ENCODE measurements at regions of chr6 and their contacts with region 1.

Region 1: GRCh38 chr6:24855395-24856245 is 56.9 kb upstream of the ARMH2 start:
- DNase-seq: peak; percentile 25 to 83 (median 74)
- ATAC-seq: peak; percentile 78
- H3K4me3 ChIP-seq: no peak overlapping the region
- H3K4me3 Mint-ChIP-seq: peak overlapping the region in 8 of 10 donors; percentile 48 to 89 (median 62)
- H3K27ac ChIP-seq: peak overlapping the region; percentile 72
- H3K27ac Mint-ChIP-seq: peak overlapping the region; percentile 86 to 99 (median 94)
- H3K4me1 ChIP-seq: peaks cover 47 to 59% of the 10 kb centered on the region in 2 donors
- H3K4me1 Mint-ChIP-seq: peaks cover 51 to 72% (median 66%) of the 10 kb centered on the region in 7 donors
- H3K27me3 ChIP-seq: no peaks in the 10 kb centered on the region
- H3K27me3 Mint-ChIP-seq: no peaks in the 10 kb centered on the region

Region 2: DNA sequence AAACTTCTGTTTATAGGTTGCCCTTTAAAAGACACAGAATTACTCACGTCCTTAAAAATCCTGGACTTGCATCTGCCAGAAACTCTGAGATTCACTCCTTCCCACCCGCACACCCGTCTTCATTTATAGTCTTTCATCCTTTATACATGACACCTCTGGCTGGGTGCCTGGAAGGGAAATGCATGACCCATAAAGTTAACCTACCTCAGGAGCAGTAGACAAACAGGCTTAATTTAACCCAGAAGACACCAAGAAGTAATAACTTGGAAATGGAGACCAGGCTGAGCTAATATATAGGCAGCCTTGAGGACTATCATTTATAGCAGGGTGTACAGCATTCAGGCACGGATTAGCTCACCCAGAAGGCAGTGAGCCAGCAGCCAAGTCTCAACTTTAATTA is 1158.6 kb before region 1 on chr6:
- CTCF ChIA-PET with region 1: no interaction called
- POLR2A ChIA-PET with region 1: no interaction called
- intact Hi-C with region 1: no loop called
- DNase-seq: no peak
- ATAC-seq: no peak
- H3K4me3 ChIP-seq: no peak overlapping the region
- H3K4me3 Mint-ChIP-seq: no peak overlapping the region
- H3K27ac ChIP-seq: no peak overlapping the region
- H3K27ac Mint-ChIP-seq: no peak overlapping the region
- H3K4me1 ChIP-seq: no peaks in the 10 kb centered on the region
- H3K4me1 Mint-ChIP-seq: no peaks in the 10 kb centered on the region
- H3K27me3 ChIP-seq: no peaks in the 10 kb centered on the region
- H3K27me3 Mint-ChIP-seq: no peaks in the 10 kb centered on the region

Region 3: DNA sequence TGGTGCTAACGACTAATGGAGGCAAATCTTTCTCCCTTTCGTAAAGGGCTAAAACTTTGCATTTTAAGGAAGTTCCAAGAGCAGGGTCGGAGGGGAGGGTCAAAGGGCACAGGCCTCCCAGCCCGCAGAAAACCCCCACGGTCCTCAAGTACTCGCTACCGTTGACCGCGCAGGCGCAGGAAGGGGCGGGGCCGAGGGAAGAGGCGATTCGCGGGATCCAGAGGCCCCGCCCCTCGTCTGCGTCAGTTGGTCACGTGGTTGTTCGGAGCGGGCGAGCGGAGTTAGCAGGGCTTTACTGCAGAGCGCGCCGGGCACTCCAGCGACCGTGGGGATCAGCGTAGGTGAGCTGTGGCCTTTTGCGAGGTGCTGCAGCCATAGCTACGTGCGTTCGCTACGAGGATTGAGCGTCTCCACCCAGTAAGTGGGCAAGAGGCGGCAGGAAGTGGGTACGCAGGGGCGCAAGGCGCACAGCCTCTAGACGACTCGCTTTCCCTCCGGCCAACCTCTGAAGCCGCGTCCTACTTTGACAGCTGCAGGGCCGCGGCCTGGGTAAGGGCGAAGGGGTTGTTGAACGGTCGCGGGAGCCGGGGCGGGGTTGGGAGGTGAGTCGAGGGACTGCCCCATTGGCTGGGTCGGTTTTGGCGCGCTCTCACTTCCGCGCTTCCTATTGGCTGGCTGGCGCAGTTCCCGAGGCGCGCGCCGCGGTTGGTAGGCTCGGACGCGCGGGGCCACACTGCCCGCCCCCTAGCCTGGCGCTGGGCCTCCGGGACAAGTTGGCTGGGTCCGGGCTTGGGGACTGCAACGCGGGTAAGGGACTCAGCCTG is 80.7 kb before region 1 on chr6 and contains the start of gene GMNN:
- CTCF ChIA-PET with region 1: no interaction called
- POLR2A ChIA-PET with region 1: no interaction called
- intact Hi-C with region 1: loop called in 1 of 2 experiments (anchors 5 kb)
- DNase-seq: peak; percentile 91 to 99 (median 94)
- ATAC-seq: peak; percentile 95
- H3K4me3 ChIP-seq: peak within 1 kb of the TSS; percentile 93
- H3K4me3 Mint-ChIP-seq: peak within 1 kb of the TSS; percentile 98 to 99 (median 98)
- H3K27ac ChIP-seq: peak within 1 kb of the TSS; percentile 90
- H3K27ac Mint-ChIP-seq: peak within 1 kb of the TSS; percentile 91 to 98 (median 97)
- H3K4me1 ChIP-seq: peaks cover 6 to 7% of the 10 kb centered on the region in 2 donors
- H3K4me1 Mint-ChIP-seq: peaks cover 10 to 38% (median 21%) of the 10 kb centered on the region in 7 donors
- H3K27me3 ChIP-seq: no peaks in the 10 kb centered on the region
- H3K27me3 Mint-ChIP-seq: no peaks in the 10 kb centered on the region
- total RNA-seq, gene GMNN: 5.1 to 54.6 (median 7.0) TPM

Region 4: GRCh38 chr6:24874776-24875534 is 19.3 kb after region 1 on chr6:
- CTCF ChIA-PET with region 1: interaction called, 4 read pairs
- POLR2A ChIA-PET with region 1: interaction called, 5 read pairs
- intact Hi-C with region 1: loop called in 1 of 2 experiments (anchors 2 kb)
- DNase-seq: no peak
- ATAC-seq: peak; percentile 42
- H3K4me3 ChIP-seq: no peak overlapping the region
- H3K4me3 Mint-ChIP-seq: peak overlapping the region in 1 of 10 donors; percentile 41
- H3K27ac ChIP-seq: peak overlapping the region; percentile 42
- H3K27ac Mint-ChIP-seq: peak overlapping the region in 8 of 9 donors; percentile 42 to 93 (median 84)
- H3K4me1 ChIP-seq: peaks cover 21 to 49% of the 10 kb centered on the region in 2 donors
- H3K4me1 Mint-ChIP-seq: peaks cover 32 to 94% (median 81%) of the 10 kb centered on the region in 7 donors
- H3K27me3 ChIP-seq: no peaks in the 10 kb centered on the region
- H3K27me3 Mint-ChIP-seq: no peaks in the 10 kb centered on the region

Region 5: GRCh38 chr6:24910961-24911712 is 55.5 kb after region 1 on chr6:
- CTCF ChIA-PET with region 1: interaction called, 25 read pairs
- POLR2A ChIA-PET with region 1: interaction called, 7 read pairs
- intact Hi-C with region 1: loop called (anchors 2 kb)
- DNase-seq: peak in 6 of 9 donors; percentile 37 to 67 (median 56)
- ATAC-seq: peak; percentile 60
- H3K4me3 ChIP-seq: peak overlapping the region; percentile 41
- H3K4me3 Mint-ChIP-seq: peak overlapping the region; percentile 92 to 97 (median 96)
- H3K27ac ChIP-seq: peak overlapping the region; percentile 75
- H3K27ac Mint-ChIP-seq: peak overlapping the region; percentile 88 to 99 (median 97)
- H3K4me1 ChIP-seq: peaks cover 88 to 93% of the 10 kb centered on the region in 2 donors
- H3K4me1 Mint-ChIP-seq: peaks cover 88 to 98% (median 97%) of the 10 kb centered on the region in 7 donors
- H3K27me3 ChIP-seq: no peaks in the 10 kb centered on the region
- H3K27me3 Mint-ChIP-seq: no peaks in the 10 kb centered on the region

Region 6: GRCh38 chr6:25027221-25027916 is 171.7 kb after region 1 on chr6:
- CTCF ChIA-PET with region 1: interaction called, 5 read pairs
- POLR2A ChIA-PET with region 1: interaction called, 18 read pairs
- intact Hi-C with region 1: no loop called
- DNase-seq: peak; percentile 47 to 79 (median 69)
- ATAC-seq: peak; percentile 97
- H3K4me3 ChIP-seq: peak overlapping the region; percentile 50
- H3K4me3 Mint-ChIP-seq: peak overlapping the region; percentile 63 to 84 (median 81)
- H3K27ac ChIP-seq: peak overlapping the region; percentile 50
- H3K27ac Mint-ChIP-seq: peak overlapping the region; percentile 60 to 87 (median 83)
- H3K4me1 ChIP-seq: peaks cover 22 to 30% of the 10 kb centered on the region in 2 donors
- H3K4me1 Mint-ChIP-seq: peaks cover 27 to 57% (median 48%) of the 10 kb centered on the region in 7 donors
- H3K27me3 ChIP-seq: no peaks in the 10 kb centered on the region
- H3K27me3 Mint-ChIP-seq: no peaks in the 10 kb centered on the region